ENCODE measurements at regions of chr7 and their contacts with region 1.

Region 1: DNA sequence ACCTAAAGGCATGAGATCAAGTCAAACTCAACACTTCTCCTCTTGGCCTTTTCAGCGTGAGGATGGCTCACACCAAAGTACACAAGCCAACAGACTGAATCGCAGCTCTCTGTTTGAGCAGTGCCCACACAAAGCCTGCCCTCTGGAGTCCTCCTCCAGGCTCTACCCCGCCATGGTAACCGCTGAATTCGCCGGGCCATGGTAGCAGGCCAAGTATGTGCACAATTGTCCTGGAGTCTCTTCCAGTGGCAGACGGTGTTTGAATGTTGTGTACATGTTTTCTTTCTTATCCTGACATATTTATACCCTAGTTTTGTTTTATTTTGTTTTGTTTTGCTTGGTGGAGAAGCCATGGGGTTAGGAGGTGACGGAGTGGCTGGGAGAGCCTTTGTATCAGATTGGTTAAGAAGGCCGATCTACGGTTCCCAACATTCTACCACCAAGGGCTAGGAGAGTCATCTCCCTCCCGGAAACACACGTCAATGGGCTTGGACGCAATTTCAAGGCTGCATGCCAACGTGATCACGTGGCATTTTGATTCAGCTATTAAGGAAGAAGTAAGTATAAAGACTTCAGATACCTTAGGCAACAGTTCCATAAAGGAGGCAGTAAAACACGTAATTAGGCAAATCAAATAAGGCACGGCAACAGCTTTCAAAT is 12.1 kb upstream of the SHH start:
- DNase-seq: peak; percentile 85
- ATAC-seq: peak; percentile 87
- H3K4me3 ChIP-seq: no peak overlapping the region
- H3K27ac ChIP-seq: 0 out of 2 replicates have a peak overlapping the region, but pooled peaks have one; percentile 18
- H3K4me1 ChIP-seq: peaks cover 15% of the 10 kb centered on the region
- H3K27me3 ChIP-seq: no peaks in the 10 kb centered on the region
- CTCF ChIP-seq: no peak

Region 2: DNA sequence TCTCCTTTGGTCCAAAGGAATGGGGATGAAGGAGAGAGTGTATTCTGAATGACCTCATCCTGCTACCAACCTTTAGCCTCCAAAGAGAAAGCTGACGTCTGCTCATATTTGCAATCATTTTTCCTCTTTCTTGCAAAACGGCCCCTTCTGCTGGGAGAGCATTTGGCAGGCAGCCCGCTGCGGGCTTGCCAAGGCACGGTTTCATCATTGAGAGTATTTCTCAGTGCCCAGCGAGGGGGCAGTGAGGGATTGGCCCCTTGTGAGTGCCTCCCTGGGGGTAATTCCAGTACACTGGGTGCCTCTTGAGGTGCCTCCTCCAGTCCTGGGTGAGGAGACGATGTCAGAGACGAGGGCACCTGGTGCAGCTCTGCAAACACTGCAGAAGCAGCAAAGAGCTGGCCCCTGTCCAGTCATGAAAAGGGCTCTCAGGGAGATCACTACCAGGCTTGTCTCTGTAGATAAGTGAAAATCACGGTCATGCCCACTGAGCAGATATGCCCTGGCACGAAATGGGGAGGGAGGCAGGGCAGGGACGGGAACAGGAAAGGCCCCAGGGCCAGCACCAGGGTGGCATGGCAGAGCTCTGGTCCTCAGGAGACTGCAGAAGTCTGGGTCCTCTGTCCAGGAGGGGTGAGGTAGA is 36.6 kb after region 1 on chr7:
- CTCF ChIA-PET with region 1: no interaction called
- POLR2A ChIA-PET with region 1: no interaction called
- intact Hi-C with region 1: loop called (anchors 1 kb)
- DNase-seq: peak; percentile 90
- ATAC-seq: peak; percentile 29
- H3K4me3 ChIP-seq: peak overlapping the region; percentile 44
- H3K27ac ChIP-seq: peak overlapping the region; percentile 66
- H3K4me1 ChIP-seq: peaks cover 42% of the 10 kb centered on the region
- H3K27me3 ChIP-seq: no peaks in the 10 kb centered on the region
- CTCF ChIP-seq: no peak

Measured in PC-3 (cell line).